HEK293T (cell line): ENCODE measurements at regions of chr2 and their contacts with region 1.

Region 1: GRCh38 chr2:112254466-112255239 is at the start of gene ZC3H8:
- DNase-seq: peak; percentile 99

Region 2: GRCh38 chr2:112272669-112273068 is 18.0 kb after region 1 on chr2:
- CTCF ChIA-PET with region 1: interaction called, 3 read pairs
- POLR2A ChIA-PET with region 1: interaction called, 13 read pairs
- DNase-seq: no peak